ENCODE measurements at regions of chr15 and their contacts with region 1.

Region 1: DNA sequence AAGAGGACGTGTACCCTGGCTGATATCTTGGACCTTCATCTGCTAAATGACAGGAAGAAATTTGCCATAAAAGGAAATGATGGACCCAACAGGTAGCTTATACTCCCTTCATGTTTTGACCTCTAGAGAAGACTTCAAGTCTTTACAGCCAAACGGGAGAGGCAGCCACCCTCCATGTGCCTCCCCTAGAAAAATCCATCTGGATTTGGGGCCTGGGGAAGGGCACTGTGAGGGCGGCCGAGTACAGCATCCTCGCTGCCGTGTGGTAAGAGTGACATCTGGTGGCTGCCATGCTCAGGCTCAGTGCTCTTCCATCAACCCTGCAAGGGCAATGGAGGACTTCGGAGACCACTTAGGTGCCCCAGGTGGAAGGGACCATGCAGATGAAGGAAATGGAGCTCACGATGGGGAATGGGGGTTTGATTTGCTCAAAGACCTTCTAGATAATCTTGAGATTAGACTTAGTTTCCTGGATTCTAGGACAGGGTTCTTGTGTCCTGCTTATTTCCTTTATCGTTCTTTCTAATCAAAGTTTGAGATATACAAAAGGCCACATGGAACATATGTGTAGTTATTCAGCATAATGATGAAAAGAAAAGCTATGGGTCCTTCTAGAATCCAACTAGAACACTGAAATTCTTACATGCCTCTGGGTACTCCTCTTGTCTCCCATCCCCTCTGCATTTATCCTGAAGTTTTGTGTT is 44.4 kb downstream of the AQP9 start:
- DNase-seq: peak; percentile 36 to 73
- H3K4me3 ChIP-seq: no peak overlapping the region
- H3K27ac ChIP-seq: no peak overlapping the region
- H3K4me1 ChIP-seq: no peaks in the 10 kb centered on the region
- H3K27me3 ChIP-seq: peaks cover 0 to 2% (median 0%) of the 10 kb centered on the region in 4 experiments; a peak in 1 of 7 replicates
- CTCF ChIP-seq: peak; percentile 95 to 97 (median 96)
- EP300 ChIP-seq: no peak
- POLR2A ChIP-seq: no peak
- RAD21 ChIP-seq: peak; percentile 99 to 100

Region 2: GRCh38 chr15:57861036-57861638 is 321.5 kb before region 1 on chr15:
- CTCF ChIA-PET with region 1: interaction called, 14 read pairs
- POLR2A ChIA-PET with region 1: no interaction called
- DNase-seq: no peak
- H3K4me3 ChIP-seq: no peak overlapping the region
- H3K27ac ChIP-seq: no peak overlapping the region
- H3K4me1 ChIP-seq: no peaks in the 10 kb centered on the region
- H3K27me3 ChIP-seq: no peaks in the 10 kb centered on the region
- CTCF ChIP-seq: peak in 2 of 3 experiments; percentile 64 to 66; a peak in 3 of 4 replicates
- EP300 ChIP-seq: no peak
- POLR2A ChIP-seq: no peak
- RAD21 ChIP-seq: peak; percentile 65 to 72

Region 3: DNA sequence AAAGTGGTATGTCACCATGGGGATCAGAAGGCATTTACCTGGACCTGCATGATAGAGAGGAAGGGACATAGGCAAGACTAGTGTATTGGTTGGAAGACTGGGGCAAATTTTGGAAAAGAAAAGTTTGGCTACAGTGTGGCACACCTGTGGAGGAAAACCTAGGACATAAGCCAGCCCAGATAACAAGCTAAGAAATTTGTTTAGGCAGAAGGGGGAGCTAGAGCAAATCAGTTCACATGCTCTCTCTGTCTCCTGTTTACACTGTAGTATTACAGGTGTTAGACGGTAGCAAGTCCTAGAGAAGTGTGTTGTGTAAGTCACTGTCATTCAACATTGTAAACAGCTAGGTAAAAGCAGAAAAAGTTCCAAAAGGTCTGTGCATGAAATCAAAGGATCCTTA is 105.2 kb before region 1 on chr15:
- CTCF ChIA-PET with region 1: interaction called, 39 read pairs
- POLR2A ChIA-PET with region 1: no interaction called
- DNase-seq: no peak
- H3K4me3 ChIP-seq: no peak overlapping the region
- H3K27ac ChIP-seq: no peak overlapping the region
- H3K4me1 ChIP-seq: peaks cover 0 to 3% (median 0%) of the 10 kb centered on the region in 4 experiments; a peak in 1 of 7 replicates
- H3K27me3 ChIP-seq: no peaks in the 10 kb centered on the region
- CTCF ChIP-seq: peak in 2 of 3 experiments; percentile 54 to 59; a peak in 2 of 4 replicates
- EP300 ChIP-seq: no peak
- POLR2A ChIP-seq: no peak
- RAD21 ChIP-seq: peak; percentile 63 to 66

Region 4: GRCh38 chr15:58103482-58103881 is 79.1 kb before region 1 on chr15:
- CTCF ChIA-PET with region 1: no interaction called
- POLR2A ChIA-PET with region 1: no interaction called
- DNase-seq: no peak
- H3K4me3 ChIP-seq: no peak overlapping the region
- H3K27ac ChIP-seq: no peak overlapping the region
- H3K4me1 ChIP-seq: no peaks in the 10 kb centered on the region
- H3K27me3 ChIP-seq: no peaks in the 10 kb centered on the region
- CTCF ChIP-seq: no peak
- EP300 ChIP-seq: no peak
- POLR2A ChIP-seq: no peak
- RAD21 ChIP-seq: no peak

Region 5: GRCh38 chr15:58165661-58166060 is 17.0 kb before region 1 on chr15:
- CTCF ChIA-PET with region 1: interaction called, 20 read pairs
- POLR2A ChIA-PET with region 1: interaction called, 4 read pairs
- DNase-seq: no peak
- H3K4me3 ChIP-seq: no peak overlapping the region
- H3K27ac ChIP-seq: no peak overlapping the region
- H3K4me1 ChIP-seq: no peaks in the 10 kb centered on the region
- H3K27me3 ChIP-seq: no peaks in the 10 kb centered on the region; a peak in 1 of 7 replicates
- CTCF ChIP-seq: no peak
- EP300 ChIP-seq: no peak
- POLR2A ChIP-seq: no peak
- RAD21 ChIP-seq: no peak

Measured in H1 (cell line).